ENCODE measurements at regions of chr13 and their contacts with region 1.

Region 1: GRCh38 chr13:21137696-21138095 is 38.7 kb downstream of the SKA3 start:
- DNase-seq: peak; percentile 10 to 59 (median 24)
- H3K4me3 ChIP-seq: no peak overlapping the region
- H3K4me3 Mint-ChIP-seq: no peak overlapping the region
- H3K27ac ChIP-seq: no peak overlapping the region
- H3K27ac Mint-ChIP-seq: no peak overlapping the region
- H3K4me1 ChIP-seq: peaks cover 11 to 25% of the 10 kb centered on the region in 2 donors
- H3K4me1 Mint-ChIP-seq: peaks cover 24% of the 10 kb centered on the region
- H3K27me3 ChIP-seq: no peaks in the 10 kb centered on the region
- H3K27me3 Mint-ChIP-seq: no peaks in the 10 kb centered on the region
- CTCF ChIP-seq: no peak

Region 2: GRCh38 chr13:20945952-20946383 is 191.7 kb before region 1 on chr13:
- intact Hi-C with region 1: loop called in 1 of 2 experiments (anchors 10 kb)
- DNase-seq: peak; percentile 38 to 55 (median 55)
- H3K4me3 ChIP-seq: peak overlapping the region; percentile 10 to 66 (median 35)
- H3K4me3 Mint-ChIP-seq: peak overlapping the region; percentile 73 to 88
- H3K27ac ChIP-seq: no peak overlapping the region
- H3K27ac Mint-ChIP-seq: peak overlapping the region in 5 of 7 donors; percentile 15 to 81 (median 72)
- H3K4me1 ChIP-seq: peaks cover 20 to 22% of the 10 kb centered on the region in 2 donors
- H3K4me1 Mint-ChIP-seq: peaks cover 30% of the 10 kb centered on the region
- H3K27me3 ChIP-seq: peaks cover 3 to 7% of the 10 kb centered on the region in 2 donors
- H3K27me3 Mint-ChIP-seq: peaks cover 7 to 29% (median 19%) of the 10 kb centered on the region in 3 donors
- CTCF ChIP-seq: no peak

Region 3: DNA sequence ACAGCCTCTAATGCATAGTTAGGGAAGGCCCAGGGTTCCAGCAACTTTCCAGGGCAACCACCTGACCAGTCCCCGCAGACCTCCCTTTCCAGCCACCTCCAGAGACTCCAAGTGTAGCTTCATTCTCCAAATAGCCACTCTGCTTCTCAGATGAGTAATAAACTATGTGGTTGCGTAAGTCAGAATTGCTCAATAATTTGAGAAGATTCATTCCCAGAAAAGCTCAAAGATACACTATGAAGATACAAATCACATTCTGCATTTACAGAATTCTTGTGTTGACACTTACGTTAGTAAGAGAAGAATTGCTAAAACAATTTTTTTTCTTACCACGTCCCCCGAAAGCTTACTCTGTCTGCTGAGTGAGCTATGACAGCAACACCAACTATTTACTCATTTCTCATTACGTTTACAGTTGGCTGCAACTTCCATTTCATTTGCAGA is 68.1 kb before region 1 on chr13:
- intact Hi-C with region 1: loop called in 1 of 2 experiments (anchors 5 kb)
- DNase-seq: peak; percentile 80 to 93 (median 89)
- H3K4me3 ChIP-seq: peak overlapping the region in 1 of 3 experiments; percentile 50
- H3K4me3 Mint-ChIP-seq: peak overlapping the region; percentile 27 to 69
- H3K27ac ChIP-seq: peak overlapping the region in 1 of 2 donors; percentile 76
- H3K27ac Mint-ChIP-seq: peak overlapping the region; percentile 60 to 88 (median 84)
- H3K4me1 ChIP-seq: peaks cover 65 to 75% of the 10 kb centered on the region in 2 donors
- H3K4me1 Mint-ChIP-seq: peaks cover 62% of the 10 kb centered on the region
- H3K27me3 ChIP-seq: no peaks in the 10 kb centered on the region
- H3K27me3 Mint-ChIP-seq: no peaks in the 10 kb centered on the region
- CTCF ChIP-seq: no peak